ENCODE measurements at regions of chr1 and their contacts with region 1.

Region 1: DNA sequence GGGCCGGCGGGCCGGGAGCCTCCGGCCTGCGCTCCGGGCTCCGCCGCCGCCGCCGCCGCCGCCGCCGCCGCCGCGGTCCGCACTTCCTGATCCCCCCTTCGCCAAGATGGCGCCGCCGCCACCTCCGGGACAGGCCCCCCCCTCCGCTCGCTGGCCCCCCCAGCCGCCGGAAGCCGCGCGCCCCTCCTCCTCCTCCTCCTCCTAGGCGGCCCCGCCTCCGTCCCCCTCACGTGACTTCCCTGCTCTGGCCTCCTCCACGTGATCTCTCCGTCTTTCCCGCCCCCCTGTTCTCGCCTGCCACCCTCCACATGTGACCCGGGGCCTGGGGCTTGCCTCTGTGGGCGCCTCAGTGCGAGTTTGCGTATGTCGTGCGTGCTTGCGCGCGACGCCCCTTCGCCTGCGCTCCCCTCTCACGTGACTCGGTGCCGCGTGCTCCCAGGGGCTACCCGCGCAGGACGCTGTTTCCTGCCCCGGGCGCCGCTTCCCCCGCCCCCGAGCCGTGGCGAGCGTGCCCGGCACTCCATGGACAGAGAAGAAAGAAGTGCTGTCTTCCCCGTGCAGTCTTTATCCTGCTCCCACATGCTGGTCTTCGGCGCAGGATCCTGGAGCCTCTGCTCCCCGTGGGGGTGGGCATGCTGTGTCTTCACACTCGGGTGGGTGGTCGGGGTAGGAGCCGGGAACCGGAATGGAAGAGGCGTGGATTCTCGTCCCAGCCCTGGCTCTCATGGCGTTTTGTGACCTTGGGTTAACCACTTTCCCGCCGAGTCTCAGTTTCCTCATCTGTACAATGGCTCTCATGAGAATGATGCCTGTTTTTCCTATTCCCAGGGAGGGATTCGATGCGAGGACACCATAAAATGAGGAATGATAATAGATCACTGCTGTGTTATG is at the start of gene UBE2Q1:
- DNase-seq: peak; percentile 100
- H3K4me3 ChIP-seq: peak within 1 kb of the TSS; percentile 53 to 98 (median 88)
- H3K27ac ChIP-seq: peak within 1 kb of the TSS; percentile 63 to 96 (median 90)
- H3K4me1 ChIP-seq: peaks cover 15 to 54% (median 32%) of the 10 kb centered on the region in 6 donors
- H3K27me3 ChIP-seq: no peaks in the 10 kb centered on the region
- CTCF ChIP-seq: peak in 1 of 11 experiments; percentile 24
- POLR2A ChIP-seq: no peak
- total RNA-seq, gene UBE2Q1: 45.0 to 119 (median 95.1) TPM

Region 2: DNA sequence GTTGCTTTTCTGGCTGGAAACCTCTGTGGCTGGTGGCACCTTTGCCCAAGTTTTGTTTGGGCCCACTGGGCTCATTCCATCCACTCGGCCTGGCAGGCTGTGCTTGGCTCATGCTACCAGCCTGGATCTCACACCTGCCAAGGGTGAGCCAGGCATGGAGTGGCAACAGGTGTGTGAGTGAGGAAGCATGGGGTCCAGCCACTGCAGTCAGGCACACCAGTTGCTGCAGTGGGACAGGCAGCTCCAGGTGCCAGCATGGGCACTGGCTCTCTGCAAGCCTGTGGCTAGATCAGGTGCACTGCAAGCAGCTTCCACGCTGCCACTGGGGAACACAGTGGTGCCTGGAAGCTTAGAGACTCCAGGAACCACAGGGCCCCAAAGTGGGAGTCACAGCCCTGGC is 460.9 kb before region 1 on chr1:
- intact Hi-C with region 1: no loop called
- DNase-seq: no peak
- H3K4me3 ChIP-seq: no peak overlapping the region
- H3K27ac ChIP-seq: no peak overlapping the region
- H3K4me1 ChIP-seq: no peaks in the 10 kb centered on the region
- H3K27me3 ChIP-seq: no peaks in the 10 kb centered on the region
- CTCF ChIP-seq: no peak
- POLR2A ChIP-seq: no peak

Region 3: GRCh38 chr1:154493276-154493675 is 65.5 kb before region 1 on chr1:
- intact Hi-C with region 1: loop called (anchors 5 kb)
- DNase-seq: peak; percentile 87
- H3K4me3 ChIP-seq: peak overlapping the region in 3 of 8 donors; percentile 6 to 45 (median 16)
- H3K27ac ChIP-seq: peak overlapping the region; percentile 1 to 81 (median 72)
- H3K4me1 ChIP-seq: peaks cover 52 to 100% (median 88%) of the 10 kb centered on the region in 6 donors
- H3K27me3 ChIP-seq: no peaks in the 10 kb centered on the region
- CTCF ChIP-seq: peak in 7 of 11 experiments; percentile 5 to 49 (median 34)
- POLR2A ChIP-seq: no peak

Region 4: DNA sequence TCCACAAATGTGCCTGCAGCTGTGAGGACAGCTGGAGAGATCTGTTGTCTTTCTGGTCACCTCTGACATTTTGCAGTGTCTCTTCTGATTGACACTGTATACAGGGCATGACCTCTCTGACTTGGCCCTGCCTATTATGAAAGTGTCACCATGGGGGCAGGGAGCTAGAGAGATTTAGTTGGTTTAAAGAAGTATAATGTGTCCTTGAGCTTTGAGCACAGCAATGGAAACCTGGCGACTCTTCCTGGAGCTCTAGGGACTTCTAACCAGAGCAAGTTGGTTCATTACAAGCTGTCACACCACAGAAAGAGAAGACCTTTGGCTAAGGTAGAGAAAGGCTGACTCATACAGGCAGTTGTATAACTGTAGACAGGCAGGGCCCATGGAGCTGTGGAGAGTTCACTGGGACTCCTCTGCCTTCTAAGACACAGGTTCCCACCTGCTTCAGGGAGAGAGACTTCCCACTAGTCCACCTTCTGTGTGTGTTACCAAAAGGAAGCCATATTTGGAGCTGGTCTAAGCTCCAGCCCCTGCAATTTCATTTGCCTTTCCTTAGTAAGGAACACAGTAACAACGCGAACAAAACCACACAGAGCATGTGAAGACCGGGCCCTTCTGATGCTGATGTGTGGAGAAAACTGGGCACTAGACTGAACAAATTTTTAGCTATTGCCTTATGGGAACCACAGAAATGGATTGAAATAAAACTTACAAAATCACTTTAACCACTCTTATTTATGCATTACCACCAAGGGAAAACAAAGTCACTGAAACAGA is 139.7 kb after region 1 on chr1:
- intact Hi-C with region 1: no loop called
- DNase-seq: no peak
- H3K4me3 ChIP-seq: no peak overlapping the region
- H3K27ac ChIP-seq: no peak overlapping the region
- H3K4me1 ChIP-seq: peaks cover 0 to 5% (median 0%) of the 10 kb centered on the region in 6 donors
- H3K27me3 ChIP-seq: peaks cover 0 to 8% (median 0%) of the 10 kb centered on the region in 7 donors
- CTCF ChIP-seq: no peak
- POLR2A ChIP-seq: no peak

Region 5: GRCh38 chr1:154760469-154760933 is 201.7 kb after region 1 on chr1:
- intact Hi-C with region 1: loop called (anchors 10 kb)
- DNase-seq: peak; percentile 95
- H3K4me3 ChIP-seq: peak overlapping the region; percentile 3 to 66 (median 35)
- H3K27ac ChIP-seq: peak overlapping the region in 3 of 8 donors; percentile 9 to 39 (median 37)
- H3K4me1 ChIP-seq: peaks cover 3 to 26% (median 20%) of the 10 kb centered on the region in 6 donors
- H3K27me3 ChIP-seq: peaks cover 0 to 47% (median 20%) of the 10 kb centered on the region in 7 donors
- CTCF ChIP-seq: peak; percentile 62 to 95 (median 91)
- POLR2A ChIP-seq: no peak

Region 6: DNA sequence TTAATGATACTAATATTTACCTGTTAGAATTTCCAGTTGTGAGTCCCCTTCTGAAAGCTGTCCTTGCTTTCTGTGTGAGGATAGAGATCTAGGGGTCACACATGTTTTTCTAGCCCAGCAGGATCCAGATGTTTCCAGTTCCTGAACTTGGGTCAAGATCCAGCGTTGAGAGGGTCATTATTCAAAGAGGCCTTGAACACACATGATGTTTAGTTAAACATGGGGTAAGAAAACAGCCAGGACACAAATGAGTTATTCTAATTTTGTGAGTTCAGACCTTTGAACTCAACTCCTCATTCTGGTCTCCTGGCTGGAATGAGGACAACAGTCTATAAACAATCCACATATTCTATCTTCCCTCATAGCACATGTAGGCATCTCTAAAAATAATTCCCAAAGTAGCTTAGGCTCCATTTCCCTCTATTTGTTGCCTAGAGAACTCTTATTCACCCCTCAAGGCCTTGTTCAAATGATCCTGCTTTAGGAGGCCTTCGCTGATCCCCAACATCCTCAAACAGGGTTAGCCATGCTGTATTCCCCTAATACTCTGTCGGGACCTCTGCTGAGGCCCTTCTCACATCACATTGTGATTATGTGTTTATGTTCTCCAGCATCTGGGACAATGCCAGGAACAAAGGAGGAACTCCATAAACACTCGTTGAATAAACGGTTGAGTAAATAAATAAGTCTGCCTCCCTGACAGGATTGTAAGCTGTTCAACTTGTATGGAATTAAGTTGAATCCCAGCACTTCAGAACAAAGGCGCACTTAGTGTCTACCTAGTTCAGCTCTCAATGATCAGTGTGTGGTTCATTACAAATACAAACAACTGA is 326.3 kb after region 1 on chr1:
- intact Hi-C with region 1: loop called (anchors 5 kb)
- DNase-seq: no peak
- H3K4me3 ChIP-seq: no peak overlapping the region
- H3K27ac ChIP-seq: peak overlapping the region; percentile 57 to 83 (median 79)
- H3K4me1 ChIP-seq: peaks cover 0 to 29% (median 10%) of the 10 kb centered on the region in 6 donors
- H3K27me3 ChIP-seq: no peaks in the 10 kb centered on the region
- CTCF ChIP-seq: no peak
- POLR2A ChIP-seq: no peak